ENCODE measurements at regions of chr6 and their contacts with region 1.

Region 1: GRCh38 chr6:75243333-75244062 is at the start of gene COX7A2:
- DNase-seq: peak; percentile 78
- ATAC-seq: peak; percentile 97
- H3K4me3 Mint-ChIP-seq: peak within 1 kb of the TSS; percentile 100
- H3K27ac Mint-ChIP-seq: peak within 1 kb of the TSS; percentile 100
- H3K4me1 Mint-ChIP-seq: peaks cover 21% of the 10 kb centered on the region
- H3K27me3 Mint-ChIP-seq: peaks cover 19% of the 10 kb centered on the region
- total RNA-seq, gene COX7A2: 358 to 367 TPM

Region 2: DNA sequence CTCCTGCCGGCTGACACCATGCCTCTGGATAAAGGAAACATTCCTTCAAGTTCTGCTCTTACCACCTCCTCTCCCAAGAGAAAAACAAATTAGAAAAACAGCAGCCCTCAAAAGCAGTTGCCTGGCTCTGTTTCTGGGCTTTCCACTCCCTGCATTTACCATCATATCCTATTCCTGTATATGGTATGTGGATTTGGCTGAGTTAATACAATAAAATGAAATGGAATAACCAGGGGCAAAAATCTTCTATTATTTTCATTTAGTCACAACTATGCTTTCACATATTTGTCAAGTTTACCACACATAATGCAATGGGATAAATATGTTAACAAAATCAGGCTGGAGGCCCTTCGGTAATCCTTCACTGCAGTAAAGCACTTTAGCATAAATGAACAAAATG is 71.9 kb before region 1 on chr6:
- POLR2A ChIA-PET with region 1: no interaction called
- DNase-seq: no peak
- ATAC-seq: no peak
- H3K4me3 Mint-ChIP-seq: no peak overlapping the region
- H3K27ac Mint-ChIP-seq: no peak overlapping the region
- H3K4me1 Mint-ChIP-seq: no peaks in the 10 kb centered on the region
- H3K27me3 Mint-ChIP-seq: peaks cover 6% of the 10 kb centered on the region

Region 3: GRCh38 chr6:75284632-75285286 is 41.3 kb after region 1 on chr6 and contains the start of gene TMEM30A:
- POLR2A ChIA-PET with region 1: interaction called, 33 read pairs
- DNase-seq: peak; percentile 93
- ATAC-seq: peak; percentile 95
- H3K4me3 Mint-ChIP-seq: no peak within 1 kb of the TSS
- H3K27ac Mint-ChIP-seq: no peak within 1 kb of the TSS
- H3K4me1 Mint-ChIP-seq: peaks cover 38% of the 10 kb centered on the region
- H3K27me3 Mint-ChIP-seq: no peaks in the 10 kb centered on the region
- total RNA-seq, gene TMEM30A: 51.5 to 61.6 TPM

Measured in activated naive CD8-positive, alpha-beta T cell treated with anti-CD3 and anti-CD28 coated beads, Interleukin-2, amount 10 ng/mL, durations not matched to agents 7 days and 5 days (primary cell).